Right cardiac atrium (tissue), 5 donors: ENCODE measurements at regions of chr11 and their contacts with region 1.

Region 1: GRCh38 chr11:7571640-7572000 is 57.8 kb downstream of the PPFIBP2 start:
- DNase-seq: peak; percentile 57 to 86 (median 77)
- ATAC-seq: peak; percentile 69 to 75
- H3K4me3 ChIP-seq: no peak overlapping the region
- H3K27ac ChIP-seq: no peak overlapping the region
- H3K4me1 ChIP-seq: peaks cover 9% of the 10 kb centered on the region
- H3K27me3 ChIP-seq: no peaks in the 10 kb centered on the region

Region 2: GRCh38 chr11:7513234-7514098 is 58.2 kb before region 1 on chr11 and contains the start of gene PPFIBP2:
- intact Hi-C with region 1: loop called in 1 of 4 experiments (anchors 10 kb)
- DNase-seq: peak; percentile 84 to 94 (median 93)
- ATAC-seq: peak; percentile 95 to 96
- H3K4me3 ChIP-seq: peak within 1 kb of the TSS; percentile 71
- H3K27ac ChIP-seq: peak within 1 kb of the TSS; percentile 82
- H3K4me1 ChIP-seq: peaks cover 4% of the 10 kb centered on the region
- H3K27me3 ChIP-seq: no peaks in the 10 kb centered on the region
- total RNA-seq, gene PPFIBP2: 13.7 to 45.3 (median 27.3) TPM

Region 3: DNA sequence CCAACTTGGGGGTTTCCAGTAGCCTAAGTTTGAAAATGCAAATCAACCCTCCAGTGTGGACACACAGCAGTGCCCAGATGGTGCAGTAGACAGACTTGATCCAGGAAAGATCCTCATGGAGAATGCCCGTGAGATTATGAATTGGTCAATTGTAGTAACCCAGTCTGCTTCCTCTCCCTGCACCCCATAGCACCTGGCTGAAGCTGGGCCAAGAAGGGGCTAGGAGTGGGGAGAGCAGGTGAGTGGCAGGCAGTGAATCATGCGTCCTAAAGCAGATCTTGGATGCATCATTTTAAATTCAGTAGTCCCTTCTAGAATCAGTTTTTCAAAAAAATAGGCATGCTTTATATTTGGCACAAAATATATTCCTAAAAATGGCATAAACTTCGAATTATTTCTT is 49.5 kb after region 1 on chr11:
- intact Hi-C with region 1: no loop called
- DNase-seq: no peak
- ATAC-seq: no peak
- H3K4me3 ChIP-seq: no peak overlapping the region
- H3K27ac ChIP-seq: no peak overlapping the region
- H3K4me1 ChIP-seq: no peaks in the 10 kb centered on the region
- H3K27me3 ChIP-seq: no peaks in the 10 kb centered on the region

Region 4: DNA sequence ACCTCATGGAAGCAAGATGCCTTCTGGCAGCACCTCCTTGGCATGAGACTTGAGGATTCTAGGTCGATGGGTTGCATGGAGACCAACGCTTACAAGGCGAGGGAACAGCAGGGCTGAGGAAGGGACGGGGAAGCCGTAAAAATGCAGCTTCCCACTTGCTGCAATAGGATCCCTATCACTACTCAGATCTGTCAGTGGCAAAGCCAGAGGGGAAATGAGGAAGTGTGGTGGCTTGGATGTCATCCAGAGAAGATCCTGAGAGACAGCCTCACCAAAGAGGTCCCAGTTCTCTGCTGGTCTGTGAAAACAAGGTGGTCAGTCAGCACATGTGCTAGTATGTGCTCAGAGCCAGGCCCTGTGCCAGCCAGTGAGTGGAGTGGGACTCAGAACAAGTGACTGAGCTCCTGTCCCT is 79.5 kb after region 1 on chr11:
- intact Hi-C with region 1: loop called in 2 of 4 experiments (anchors 5 kb)
- DNase-seq: no peak
- ATAC-seq: no peak
- H3K4me3 ChIP-seq: no peak overlapping the region
- H3K27ac ChIP-seq: no peak overlapping the region
- H3K4me1 ChIP-seq: no peaks in the 10 kb centered on the region
- H3K27me3 ChIP-seq: no peaks in the 10 kb centered on the region

Region 5: GRCh38 chr11:7657306-7658025 is 85.8 kb after region 1 on chr11:
- intact Hi-C with region 1: loop called in 3 of 4 experiments (anchors 1 to 5 kb)
- DNase-seq: peak; percentile 69 to 84 (median 73)
- ATAC-seq: peak; percentile 95 to 97
- H3K4me3 ChIP-seq: no peak overlapping the region
- H3K27ac ChIP-seq: no peak overlapping the region
- H3K4me1 ChIP-seq: no peaks in the 10 kb centered on the region
- H3K27me3 ChIP-seq: no peaks in the 10 kb centered on the region

Region 6: DNA sequence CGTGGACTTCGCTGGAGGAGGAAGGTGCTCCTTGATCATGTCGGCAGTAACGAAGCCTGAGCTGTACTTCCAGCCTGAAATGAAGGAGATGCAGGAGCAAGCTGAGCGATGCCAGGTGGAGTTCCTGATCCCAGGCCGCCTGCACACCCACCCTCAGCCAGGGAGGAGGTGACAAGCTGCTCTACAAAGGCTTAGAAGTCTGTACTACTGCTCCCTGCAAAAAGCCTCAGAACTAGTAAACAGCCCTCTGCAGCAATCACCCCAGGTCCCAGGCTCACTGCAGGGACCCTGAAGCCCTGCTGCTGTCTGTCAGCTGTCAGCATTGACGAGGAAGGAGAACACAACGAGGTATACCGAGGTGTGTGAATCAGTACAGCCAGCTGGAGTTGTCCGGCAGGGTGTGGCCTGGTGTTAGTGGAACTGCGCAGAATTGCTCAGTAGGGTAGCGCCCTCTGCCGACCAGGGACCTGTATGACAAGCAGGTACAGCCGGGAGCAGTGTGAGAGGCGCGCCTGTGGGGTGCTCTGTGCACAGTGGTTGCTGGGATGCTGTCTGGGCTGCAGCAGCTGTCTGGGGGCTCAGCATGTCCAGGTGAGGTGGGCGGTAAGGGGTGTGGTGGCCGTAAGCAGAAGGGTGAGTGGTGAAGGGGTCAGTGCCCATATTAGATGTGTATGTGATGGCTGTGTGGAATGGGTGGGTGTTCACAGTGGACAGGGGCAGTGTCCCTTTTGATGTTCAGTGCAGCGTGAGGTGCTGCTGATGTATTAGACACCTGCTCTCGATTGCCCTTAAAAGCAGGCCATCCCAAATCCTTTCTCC is 94.1 kb after region 1 on chr11:
- intact Hi-C with region 1: loop called in 2 of 4 experiments (anchors 5 kb)
- DNase-seq: peak; percentile 75 to 86 (median 85)
- ATAC-seq: peak; percentile 90 to 95
- H3K4me3 ChIP-seq: no peak overlapping the region
- H3K27ac ChIP-seq: no peak overlapping the region
- H3K4me1 ChIP-seq: no peaks in the 10 kb centered on the region
- H3K27me3 ChIP-seq: no peaks in the 10 kb centered on the region